H1 (cell line): ENCODE measurements at regions of chr15 and their contacts with region 1.

Region 1: DNA sequence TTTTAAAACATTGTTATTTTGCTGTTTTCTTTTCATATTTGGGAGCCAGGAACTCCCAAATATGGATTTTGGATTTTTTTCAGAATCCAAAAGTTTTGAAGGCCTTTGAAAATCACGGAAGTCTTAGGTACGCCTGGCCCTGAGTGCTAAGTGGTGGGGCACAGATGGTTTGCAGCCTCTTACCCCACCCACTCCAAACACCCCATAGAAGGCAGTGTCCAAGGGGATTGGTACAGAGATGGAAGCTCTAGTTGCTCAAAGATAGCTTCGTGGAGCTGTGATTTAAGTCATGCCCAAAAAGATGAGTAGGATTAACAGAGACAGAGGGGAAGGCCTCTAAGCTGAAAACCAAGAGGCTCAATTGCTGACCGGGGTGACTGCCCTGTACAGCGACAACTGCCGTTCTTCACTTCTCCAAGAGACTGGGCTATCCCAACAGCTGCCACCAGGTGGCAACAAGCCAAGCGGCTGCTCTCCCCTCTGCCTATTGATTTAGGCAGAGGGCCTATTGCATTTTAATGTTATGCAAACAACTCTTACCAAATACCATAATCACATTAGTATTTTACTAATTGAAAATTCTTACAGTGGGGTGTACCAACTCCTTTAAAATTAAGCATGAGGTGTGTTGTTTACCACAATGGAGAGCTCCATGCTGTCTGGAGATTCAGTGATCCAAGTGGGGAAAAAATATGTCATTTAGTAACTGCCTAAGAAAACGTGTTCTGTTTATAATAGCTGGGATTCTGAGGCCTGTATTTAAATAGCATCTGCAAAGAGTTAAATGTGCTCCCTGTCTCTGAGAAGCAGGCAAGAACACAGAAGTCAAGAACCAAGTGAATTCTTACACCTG is 64.0 kb upstream of the C15orf61 start:
- DNase-seq: peak; percentile 23 to 96
- H3K4me3 ChIP-seq: no peak overlapping the region
- H3K27ac ChIP-seq: no peak overlapping the region
- H3K4me1 ChIP-seq: no peaks in the 10 kb centered on the region
- H3K27me3 ChIP-seq: no peaks in the 10 kb centered on the region
- CTCF ChIP-seq: peak; percentile 85 to 92 (median 89)
- EP300 ChIP-seq: no peak
- POLR2A ChIP-seq: no peak
- RAD21 ChIP-seq: peak; percentile 82 to 87

Region 2: GRCh38 chr15:67033571-67034044 is 423.3 kb before region 1 on chr15:
- CTCF ChIA-PET with region 1: no interaction called
- POLR2A ChIA-PET with region 1: no interaction called
- DNase-seq: peak in 1 of 2 experiments; percentile 59
- H3K4me3 ChIP-seq: peak overlapping the region; percentile 1 to 50 (median 6); a peak in 6 of 8 replicates
- H3K27ac ChIP-seq: no peak overlapping the region
- H3K4me1 ChIP-seq: peaks cover 11 to 48% (median 25%) of the 10 kb centered on the region in 4 experiments
- H3K27me3 ChIP-seq: peaks cover 2 to 34% (median 25%) of the 10 kb centered on the region in 4 experiments
- CTCF ChIP-seq: 0 out of 4 replicates have a peak, but pooled peaks of 1 of the 3 experiments have one; percentile 1
- EP300 ChIP-seq: no peak
- POLR2A ChIP-seq: no peak
- RAD21 ChIP-seq: peak; percentile 17 to 25; a peak in 2 of 4 replicates

Region 3: DNA sequence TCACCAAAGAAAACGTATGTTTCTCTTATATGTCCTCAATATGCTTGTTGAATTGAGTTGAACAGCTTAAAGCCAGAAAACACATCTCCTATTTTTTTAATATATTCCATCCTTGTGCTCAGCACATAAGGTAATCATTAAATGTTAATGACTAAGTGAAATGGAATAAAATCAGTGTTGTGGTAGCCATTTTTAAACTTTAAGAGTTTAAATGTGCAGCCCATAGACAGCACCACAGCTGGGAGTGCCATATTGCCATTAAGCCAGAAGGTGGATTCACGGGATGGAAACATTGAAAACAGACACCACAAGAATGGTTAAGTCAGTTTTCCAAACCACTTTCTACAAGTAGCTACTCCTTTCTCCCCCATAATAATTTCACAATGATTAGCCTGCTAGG is 12.8 kb before region 1 on chr15:
- CTCF ChIA-PET with region 1: interaction called, 31 read pairs
- POLR2A ChIA-PET with region 1: no interaction called
- DNase-seq: no peak
- H3K4me3 ChIP-seq: no peak overlapping the region
- H3K27ac ChIP-seq: no peak overlapping the region
- H3K4me1 ChIP-seq: no peaks in the 10 kb centered on the region
- H3K27me3 ChIP-seq: no peaks in the 10 kb centered on the region
- CTCF ChIP-seq: no peak
- EP300 ChIP-seq: no peak
- POLR2A ChIP-seq: no peak
- RAD21 ChIP-seq: no peak

Region 4: GRCh38 chr15:67468416-67468815 is 11.5 kb after region 1 on chr15:
- CTCF ChIA-PET with region 1: interaction called, 30 read pairs
- POLR2A ChIA-PET with region 1: no interaction called
- DNase-seq: no peak
- H3K4me3 ChIP-seq: no peak overlapping the region
- H3K27ac ChIP-seq: no peak overlapping the region
- H3K4me1 ChIP-seq: no peaks in the 10 kb centered on the region
- H3K27me3 ChIP-seq: no peaks in the 10 kb centered on the region
- CTCF ChIP-seq: no peak
- EP300 ChIP-seq: no peak
- POLR2A ChIP-seq: no peak
- RAD21 ChIP-seq: no peak

Region 5: GRCh38 chr15:67646847-67647246 is 189.9 kb after region 1 on chr15:
- CTCF ChIA-PET with region 1: no interaction called
- POLR2A ChIA-PET with region 1: no interaction called
- DNase-seq: no peak
- H3K4me3 ChIP-seq: no peak overlapping the region
- H3K27ac ChIP-seq: no peak overlapping the region
- H3K4me1 ChIP-seq: no peaks in the 10 kb centered on the region; a peak in 1 of 7 replicates
- H3K27me3 ChIP-seq: no peaks in the 10 kb centered on the region
- CTCF ChIP-seq: no peak
- EP300 ChIP-seq: no peak
- POLR2A ChIP-seq: no peak
- RAD21 ChIP-seq: no peak

Region 6: DNA sequence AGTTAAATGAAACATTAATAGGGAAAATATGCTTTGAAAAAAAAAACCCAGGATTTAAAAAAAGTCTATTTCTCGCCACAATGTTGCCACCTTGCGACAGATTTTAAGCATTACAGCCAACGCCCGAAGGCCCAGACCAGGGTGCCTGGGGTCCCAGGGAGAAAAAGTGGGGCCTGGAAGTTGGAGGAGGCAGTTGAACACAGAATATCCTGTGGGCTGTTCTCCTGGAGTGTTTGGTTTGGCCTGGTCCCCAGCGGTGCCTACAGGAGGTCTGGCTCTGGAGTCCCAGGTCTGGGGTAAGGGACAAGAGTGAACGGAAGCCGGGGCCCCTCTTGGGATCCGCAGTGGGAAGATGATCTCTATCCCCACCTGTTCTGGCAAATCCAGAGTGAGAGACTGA is 379.6 kb after region 1 on chr15:
- CTCF ChIA-PET with region 1: interaction called, 14 read pairs
- POLR2A ChIA-PET with region 1: no interaction called
- DNase-seq: peak in 1 of 2 experiments; percentile 77
- H3K4me3 ChIP-seq: peak overlapping the region in 3 of 4 experiments; percentile 39 to 63 (median 52); a peak in 6 of 8 replicates
- H3K27ac ChIP-seq: no peak overlapping the region
- H3K4me1 ChIP-seq: peaks cover 15 to 27% (median 21%) of the 10 kb centered on the region in 4 experiments; a peak in 6 of 7 replicates
- H3K27me3 ChIP-seq: peaks cover 52 to 81% (median 74%) of the 10 kb centered on the region in 4 experiments
- CTCF ChIP-seq: peak; percentile 58 to 63 (median 60)
- EP300 ChIP-seq: no peak
- POLR2A ChIP-seq: no peak
- RAD21 ChIP-seq: peak; percentile 78 to 83